CD4-positive, alpha-beta memory T cell (primary cell): ENCODE measurements at regions of chr1 and their contacts with region 1.

Region 1: GRCh38 chr1:84753516-84754385 is 63.5 kb upstream of the SSX2IP start:
- DNase-seq: peak; percentile 61 to 70 (median 65)
- H3K4me3 ChIP-seq: no peak overlapping the region
- H3K4me3 Mint-ChIP-seq: peak overlapping the region in 2 of 8 donors; percentile 0 to 17
- H3K27ac ChIP-seq: no peak overlapping the region
- H3K27ac Mint-ChIP-seq: peak overlapping the region in 1 of 7 donors; percentile 77
- H3K4me1 ChIP-seq: no peaks in the 10 kb centered on the region
- H3K4me1 Mint-ChIP-seq: peaks cover 0 to 8% (median 4%) of the 10 kb centered on the region in 4 donors
- H3K27me3 ChIP-seq: no peaks in the 10 kb centered on the region
- H3K27me3 Mint-ChIP-seq: peaks cover 12 to 26% of the 10 kb centered on the region in 2 donors

Region 2: GRCh38 chr1:83931658-83932253 is 822.0 kb before region 1 on chr1:
- CTCF ChIA-PET with region 1: interaction called, 5 read pairs
- POLR2A ChIA-PET with region 1: no interaction called
- intact Hi-C with region 1: loop called (anchors 1 kb)
- DNase-seq: peak in 4 of 5 donors; percentile 36 to 47 (median 44)
- H3K4me3 ChIP-seq: no peak overlapping the region
- H3K4me3 Mint-ChIP-seq: no peak overlapping the region
- H3K27ac ChIP-seq: no peak overlapping the region
- H3K27ac Mint-ChIP-seq: no peak overlapping the region
- H3K4me1 ChIP-seq: no peaks in the 10 kb centered on the region
- H3K4me1 Mint-ChIP-seq: no peaks in the 10 kb centered on the region
- H3K27me3 ChIP-seq: no peaks in the 10 kb centered on the region
- H3K27me3 Mint-ChIP-seq: peaks cover 4 to 5% of the 10 kb centered on the region in 2 donors

Region 3: DNA sequence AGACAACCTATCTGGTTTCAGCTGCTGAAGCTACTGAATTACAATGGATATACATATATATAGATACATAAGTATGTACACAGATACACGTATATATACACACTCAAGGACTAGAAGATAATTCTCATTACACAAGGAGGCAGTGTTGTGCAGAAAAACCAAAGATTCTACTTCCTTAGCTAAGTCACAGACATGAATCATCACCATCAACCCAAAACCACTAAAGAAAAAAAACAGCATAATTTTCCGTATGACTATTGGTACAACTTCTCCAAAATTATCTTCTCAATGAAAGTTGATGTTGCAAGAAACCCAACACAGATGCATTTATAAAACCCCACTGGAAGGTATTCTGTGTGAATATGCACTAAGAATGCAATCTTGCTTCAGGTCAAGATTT is 311.5 kb before region 1 on chr1:
- CTCF ChIA-PET with region 1: interaction called, 31 read pairs
- POLR2A ChIA-PET with region 1: interaction called, 7 read pairs
- intact Hi-C with region 1: loop called (anchors 1 kb)
- DNase-seq: peak; percentile 47 to 78 (median 72)
- H3K4me3 ChIP-seq: no peak overlapping the region
- H3K4me3 Mint-ChIP-seq: peak overlapping the region in 6 of 8 donors; percentile 37 to 68 (median 48)
- H3K27ac ChIP-seq: no peak overlapping the region
- H3K27ac Mint-ChIP-seq: peak overlapping the region in 6 of 7 donors; percentile 10 to 87 (median 62)
- H3K4me1 ChIP-seq: peaks cover 15% of the 10 kb centered on the region
- H3K4me1 Mint-ChIP-seq: peaks cover 12 to 22% (median 17%) of the 10 kb centered on the region in 4 donors
- H3K27me3 ChIP-seq: no peaks in the 10 kb centered on the region
- H3K27me3 Mint-ChIP-seq: peaks cover 4 to 9% of the 10 kb centered on the region in 2 donors

Region 4: GRCh38 chr1:84668185-84668584 is 85.6 kb before region 1 on chr1:
- CTCF ChIA-PET with region 1: interaction called, 16 read pairs
- POLR2A ChIA-PET with region 1: no interaction called
- intact Hi-C with region 1: loop called (anchors 1 kb)
- DNase-seq: no peak
- H3K4me3 ChIP-seq: no peak overlapping the region
- H3K4me3 Mint-ChIP-seq: no peak overlapping the region
- H3K27ac ChIP-seq: no peak overlapping the region
- H3K27ac Mint-ChIP-seq: no peak overlapping the region
- H3K4me1 ChIP-seq: no peaks in the 10 kb centered on the region
- H3K4me1 Mint-ChIP-seq: peaks cover 3 to 6% (median 5%) of the 10 kb centered on the region in 4 donors
- H3K27me3 ChIP-seq: no peaks in the 10 kb centered on the region
- H3K27me3 Mint-ChIP-seq: no peaks in the 10 kb centered on the region

Region 5: DNA sequence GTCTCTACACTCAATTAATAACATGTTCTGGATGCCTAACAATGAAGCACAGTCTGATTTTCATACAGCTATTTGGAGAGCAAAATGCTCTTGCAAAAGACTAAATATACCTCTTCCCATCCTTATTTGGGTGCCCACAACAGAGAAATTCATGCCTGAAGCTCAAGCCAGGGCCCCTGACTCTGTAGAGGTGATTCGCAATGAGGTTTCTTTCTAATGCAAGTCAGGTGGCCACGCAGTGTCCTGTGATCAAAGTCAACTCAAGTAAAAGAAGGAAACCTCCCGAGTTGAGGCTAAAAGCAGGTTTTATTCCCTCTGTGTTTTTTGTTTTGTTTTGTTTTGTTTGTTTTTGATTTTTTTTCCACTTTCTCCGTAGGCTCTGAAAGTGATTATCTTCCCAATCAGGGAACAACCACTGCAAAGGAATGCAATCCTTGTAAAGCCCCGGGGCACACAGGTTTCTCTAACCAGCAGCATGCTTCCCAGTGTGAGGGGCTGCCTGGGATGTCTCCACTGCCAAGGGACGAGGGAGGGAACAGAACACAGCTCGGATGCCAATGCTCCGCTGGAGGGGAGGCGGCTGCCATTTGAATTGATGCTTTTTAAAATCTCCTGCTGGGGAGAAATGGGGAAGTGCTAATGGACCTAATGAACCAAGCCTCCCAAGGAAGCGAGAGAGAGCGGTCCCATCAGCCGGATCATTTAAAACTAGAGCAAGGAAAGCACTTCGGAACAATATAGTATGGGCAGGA is 10.3 kb after region 1 on chr1:
- CTCF ChIA-PET with region 1: interaction called, 33 read pairs
- POLR2A ChIA-PET with region 1: no interaction called
- intact Hi-C with region 1: no loop called
- DNase-seq: no peak
- H3K4me3 ChIP-seq: no peak overlapping the region
- H3K4me3 Mint-ChIP-seq: no peak overlapping the region
- H3K27ac ChIP-seq: no peak overlapping the region
- H3K27ac Mint-ChIP-seq: no peak overlapping the region
- H3K4me1 ChIP-seq: no peaks in the 10 kb centered on the region
- H3K4me1 Mint-ChIP-seq: peaks cover 0 to 4% (median 2%) of the 10 kb centered on the region in 4 donors
- H3K27me3 ChIP-seq: peaks cover 5% of the 10 kb centered on the region
- H3K27me3 Mint-ChIP-seq: peaks cover 8 to 17% of the 10 kb centered on the region in 2 donors

Region 6: GRCh38 chr1:84853741-84854721 is 100.3 kb after region 1 on chr1:
- CTCF ChIA-PET with region 1: no interaction called
- POLR2A ChIA-PET with region 1: no interaction called
- intact Hi-C with region 1: no loop called
- DNase-seq: peak; percentile 58 to 77 (median 64)
- H3K4me3 ChIP-seq: no peak overlapping the region
- H3K4me3 Mint-ChIP-seq: peak overlapping the region in 5 of 8 donors; percentile 7 to 75 (median 27)
- H3K27ac ChIP-seq: peak overlapping the region; percentile 48
- H3K27ac Mint-ChIP-seq: peak overlapping the region; percentile 86 to 96 (median 93)
- H3K4me1 ChIP-seq: peaks cover 20% of the 10 kb centered on the region
- H3K4me1 Mint-ChIP-seq: peaks cover 26 to 37% (median 31%) of the 10 kb centered on the region in 4 donors
- H3K27me3 ChIP-seq: no peaks in the 10 kb centered on the region
- H3K27me3 Mint-ChIP-seq: peaks cover 0 to 1% of the 10 kb centered on the region in 2 donors

Region 7: GRCh38 chr1:84936116-84936810 is 182.5 kb after region 1 on chr1:
- CTCF ChIA-PET with region 1: interaction called, 7 read pairs
- POLR2A ChIA-PET with region 1: no interaction called
- intact Hi-C with region 1: loop called (anchors 5 kb)
- DNase-seq: peak in 4 of 5 donors; percentile 52 to 62 (median 60)
- H3K4me3 ChIP-seq: no peak overlapping the region
- H3K4me3 Mint-ChIP-seq: no peak overlapping the region
- H3K27ac ChIP-seq: no peak overlapping the region
- H3K27ac Mint-ChIP-seq: no peak overlapping the region
- H3K4me1 ChIP-seq: peaks cover 3% of the 10 kb centered on the region
- H3K4me1 Mint-ChIP-seq: peaks cover 0 to 5% (median 2%) of the 10 kb centered on the region in 4 donors
- H3K27me3 ChIP-seq: no peaks in the 10 kb centered on the region
- H3K27me3 Mint-ChIP-seq: no peaks in the 10 kb centered on the region